ENCODE measurements at regions of chr1 and their contacts with region 1.

Region 1: GRCh38 chr1:234963180-234963903 is 165.3 kb downstream of the TOMM20 start:
- DNase-seq: peak; percentile 96
- ATAC-seq: peak; percentile 81
- H3K4me3 Mint-ChIP-seq: peak overlapping the region; percentile 45
- H3K27ac Mint-ChIP-seq: peak overlapping the region; percentile 96
- H3K4me1 Mint-ChIP-seq: peaks cover 76% of the 10 kb centered on the region
- H3K27me3 Mint-ChIP-seq: no peaks in the 10 kb centered on the region

Region 2: DNA sequence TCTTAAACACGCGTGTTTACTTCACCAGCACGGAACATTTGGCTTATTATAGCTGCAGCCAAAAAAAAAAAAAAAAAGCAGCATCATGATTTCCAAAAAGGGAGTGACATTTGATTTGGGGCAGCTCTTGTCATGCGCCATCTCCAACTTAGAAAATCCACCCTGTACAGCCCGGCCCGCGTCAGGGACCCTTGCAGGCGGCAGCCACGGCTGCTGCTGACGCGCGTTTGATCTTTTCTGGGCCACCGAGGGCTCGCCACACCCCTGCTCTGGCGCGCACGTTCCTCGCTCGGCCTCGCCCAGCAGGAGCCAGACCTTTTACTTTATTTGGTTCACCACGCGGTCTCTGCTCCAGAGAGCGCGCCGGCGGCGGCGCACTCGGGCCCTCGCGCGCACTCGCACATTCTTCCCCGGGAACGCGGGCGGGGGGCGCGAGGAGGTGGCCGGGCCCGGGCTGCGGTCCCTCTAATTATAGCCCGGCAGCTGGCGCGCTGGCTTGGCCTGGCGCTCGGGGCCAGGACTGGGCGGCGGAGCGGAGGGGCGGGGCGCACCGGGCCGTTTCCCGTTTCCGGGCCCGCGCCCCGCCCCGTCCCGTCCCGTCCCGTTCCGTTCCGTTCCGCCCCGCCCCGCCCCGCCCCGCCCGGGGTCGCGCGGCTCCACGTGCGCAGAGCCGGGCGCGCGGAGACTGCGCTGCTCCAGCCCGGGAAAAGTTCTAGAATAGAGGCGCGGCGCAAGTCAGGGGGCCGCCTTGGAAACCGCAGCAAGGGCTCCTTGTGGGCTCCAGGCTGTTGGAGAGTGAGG is 363.5 kb before region 1 on chr1:
- CTCF ChIA-PET with region 1: no interaction called
- POLR2A ChIA-PET with region 1: no interaction called
- intact Hi-C with region 1: loop called in 1 of 2 experiments (anchors 1 kb)
- DNase-seq: peak; percentile 86
- ATAC-seq: peak; percentile 73
- H3K4me3 Mint-ChIP-seq: peak overlapping the region; percentile 97
- H3K27ac Mint-ChIP-seq: peak overlapping the region; percentile 91
- H3K4me1 Mint-ChIP-seq: peaks cover 49% of the 10 kb centered on the region
- H3K27me3 Mint-ChIP-seq: no peaks in the 10 kb centered on the region

Region 3: DNA sequence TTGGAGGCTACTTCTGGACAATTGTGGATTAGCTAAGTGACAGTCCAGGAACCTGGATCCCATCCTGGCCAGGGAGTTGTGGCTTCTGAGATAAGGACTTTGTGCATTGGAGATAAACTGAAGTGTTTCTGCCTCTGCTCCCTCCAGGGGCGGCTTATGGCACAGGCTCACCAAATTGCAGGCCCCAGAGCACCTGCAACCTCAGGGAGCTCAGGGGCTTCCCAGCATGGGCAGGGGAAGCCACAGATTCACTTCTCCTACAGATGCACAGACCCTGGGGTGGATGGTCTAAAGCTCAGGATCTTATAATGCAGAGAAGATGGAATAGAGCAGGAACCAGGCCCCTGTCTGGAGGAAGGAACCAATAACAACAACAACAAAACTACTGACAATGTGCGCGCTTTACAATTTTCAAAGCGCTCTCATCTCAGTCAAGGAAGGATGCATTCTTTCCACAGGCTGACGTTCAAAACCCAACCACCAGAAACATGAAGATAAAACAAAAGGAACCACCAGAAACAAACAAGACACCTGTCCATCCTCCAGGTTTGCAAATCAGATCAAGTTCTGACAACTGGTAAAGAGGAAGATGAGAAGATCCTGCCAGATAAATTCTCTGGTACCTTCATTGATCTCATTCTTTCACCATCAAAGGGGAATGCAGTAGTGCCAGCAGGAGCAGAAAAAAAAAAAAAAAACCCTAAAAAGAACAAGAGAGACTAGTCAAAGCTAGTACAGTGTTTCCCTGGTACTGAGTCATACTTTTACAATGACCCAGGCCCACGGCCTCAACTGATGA is 232.4 kb before region 1 on chr1:
- CTCF ChIA-PET with region 1: no interaction called
- POLR2A ChIA-PET with region 1: no interaction called
- intact Hi-C with region 1: loop called in 1 of 2 experiments (anchors 1 kb)
- DNase-seq: peak; percentile 77
- ATAC-seq: peak; percentile 87
- H3K4me3 Mint-ChIP-seq: peak overlapping the region; percentile 32
- H3K27ac Mint-ChIP-seq: peak overlapping the region; percentile 92
- H3K4me1 Mint-ChIP-seq: peaks cover 71% of the 10 kb centered on the region
- H3K27me3 Mint-ChIP-seq: no peaks in the 10 kb centered on the region

Region 4: GRCh38 chr1:234842726-234843641 is 120.4 kb before region 1 on chr1:
- CTCF ChIA-PET with region 1: no interaction called
- POLR2A ChIA-PET with region 1: interaction called, 7 read pairs
- intact Hi-C with region 1: loop called (anchors 1 kb)
- DNase-seq: peak; percentile 93
- ATAC-seq: peak; percentile 83
- H3K4me3 Mint-ChIP-seq: peak overlapping the region; percentile 63
- H3K27ac Mint-ChIP-seq: peak overlapping the region; percentile 94
- H3K4me1 Mint-ChIP-seq: peaks cover 85% of the 10 kb centered on the region
- H3K27me3 Mint-ChIP-seq: no peaks in the 10 kb centered on the region

Region 5: DNA sequence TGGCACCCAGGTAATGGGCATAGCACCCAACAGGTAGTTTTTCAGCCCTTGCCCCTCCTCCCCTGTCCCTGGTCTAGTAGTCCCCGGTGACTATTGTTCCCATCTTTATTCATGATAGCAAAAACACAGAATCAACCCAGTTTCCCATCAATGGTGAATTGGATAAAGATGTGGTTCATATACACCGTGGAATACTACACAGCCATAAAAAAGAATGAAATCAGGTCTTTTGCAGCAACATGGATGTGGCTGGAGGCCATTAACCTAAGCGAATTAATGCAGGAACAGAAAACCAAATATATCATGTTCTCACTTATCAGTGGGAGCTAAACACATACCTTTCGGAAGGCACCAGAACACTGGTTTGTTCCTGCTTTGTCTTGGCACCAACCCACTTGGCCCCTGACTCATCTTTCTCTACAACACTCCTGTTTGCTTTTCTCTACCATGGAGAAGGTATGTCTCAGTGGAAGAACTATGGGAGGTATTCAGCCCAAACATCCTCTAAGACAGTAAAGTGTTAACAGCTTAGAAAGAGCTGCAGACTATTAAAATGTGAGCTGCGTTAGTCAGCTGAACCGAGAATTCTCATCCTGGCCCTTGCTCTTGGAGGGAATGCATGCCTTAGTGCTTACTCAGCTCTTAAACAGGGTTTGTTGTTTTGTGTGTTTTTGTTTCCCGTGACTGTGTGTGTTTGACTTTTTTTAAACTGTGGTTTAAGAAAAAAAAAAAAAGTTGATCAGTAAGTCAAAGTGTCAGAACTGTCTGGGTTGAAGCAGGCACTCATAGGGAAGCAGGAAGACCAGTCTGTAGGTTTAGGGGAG is 37.7 kb before region 1 on chr1:
- CTCF ChIA-PET with region 1: no interaction called
- POLR2A ChIA-PET with region 1: interaction called, 4 read pairs
- intact Hi-C with region 1: loop called (anchors 2 kb)
- DNase-seq: no peak
- ATAC-seq: peak; percentile 27
- H3K4me3 Mint-ChIP-seq: peak overlapping the region; percentile 59
- H3K27ac Mint-ChIP-seq: peak overlapping the region; percentile 86
- H3K4me1 Mint-ChIP-seq: peaks cover 53% of the 10 kb centered on the region
- H3K27me3 Mint-ChIP-seq: no peaks in the 10 kb centered on the region

Region 6: DNA sequence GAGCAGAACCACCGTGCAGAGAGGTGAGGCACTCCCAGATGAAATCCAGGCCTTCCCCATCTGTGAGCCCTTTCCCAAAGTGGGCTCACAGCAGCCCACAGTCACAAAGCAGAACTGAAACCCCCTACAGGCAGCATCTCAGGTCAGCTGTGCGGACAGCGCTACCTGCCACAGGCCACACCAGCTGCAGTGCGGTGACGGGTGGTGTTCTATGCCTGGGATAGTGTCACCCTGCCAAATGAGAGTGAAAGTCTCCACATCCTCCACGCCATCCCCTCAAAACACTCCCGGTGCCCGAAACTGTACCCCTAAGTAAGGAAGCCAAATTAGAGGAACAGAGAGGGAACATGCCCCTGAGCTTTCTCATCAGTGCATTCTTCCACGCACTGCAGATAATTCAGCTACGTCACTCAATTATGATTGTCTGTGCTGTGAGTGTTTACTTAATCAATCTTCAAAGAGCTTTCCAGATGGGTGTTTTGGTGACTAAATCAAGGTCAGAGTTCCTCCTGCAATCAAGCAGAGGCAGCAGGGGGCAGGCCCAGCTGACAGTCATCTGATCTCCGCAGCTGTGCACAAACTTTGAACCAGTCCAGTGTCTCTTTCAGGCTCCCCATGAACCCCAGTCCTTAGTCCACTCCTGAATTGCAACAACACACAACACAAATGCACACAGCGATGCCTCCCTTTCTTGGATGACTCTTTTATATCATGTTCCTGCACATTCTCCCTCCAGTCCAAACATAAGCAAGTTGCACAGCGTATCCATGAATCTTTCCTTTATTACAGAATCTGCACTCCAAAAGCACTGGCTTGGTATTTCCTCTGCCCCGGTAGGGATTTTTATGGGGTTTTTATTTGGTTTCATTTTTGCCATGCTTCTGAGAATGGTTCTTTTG is 15.3 kb after region 1 on chr1:
- CTCF ChIA-PET with region 1: interaction called, 4 read pairs
- POLR2A ChIA-PET with region 1: interaction called, 4 read pairs
- intact Hi-C with region 1: loop called (anchors 1 kb)
- DNase-seq: peak; percentile 80
- ATAC-seq: peak; percentile 62
- H3K4me3 Mint-ChIP-seq: peak overlapping the region; percentile 75
- H3K27ac Mint-ChIP-seq: peak overlapping the region; percentile 98
- H3K4me1 Mint-ChIP-seq: peaks cover 66% of the 10 kb centered on the region
- H3K27me3 Mint-ChIP-seq: no peaks in the 10 kb centered on the region

Region 7: DNA sequence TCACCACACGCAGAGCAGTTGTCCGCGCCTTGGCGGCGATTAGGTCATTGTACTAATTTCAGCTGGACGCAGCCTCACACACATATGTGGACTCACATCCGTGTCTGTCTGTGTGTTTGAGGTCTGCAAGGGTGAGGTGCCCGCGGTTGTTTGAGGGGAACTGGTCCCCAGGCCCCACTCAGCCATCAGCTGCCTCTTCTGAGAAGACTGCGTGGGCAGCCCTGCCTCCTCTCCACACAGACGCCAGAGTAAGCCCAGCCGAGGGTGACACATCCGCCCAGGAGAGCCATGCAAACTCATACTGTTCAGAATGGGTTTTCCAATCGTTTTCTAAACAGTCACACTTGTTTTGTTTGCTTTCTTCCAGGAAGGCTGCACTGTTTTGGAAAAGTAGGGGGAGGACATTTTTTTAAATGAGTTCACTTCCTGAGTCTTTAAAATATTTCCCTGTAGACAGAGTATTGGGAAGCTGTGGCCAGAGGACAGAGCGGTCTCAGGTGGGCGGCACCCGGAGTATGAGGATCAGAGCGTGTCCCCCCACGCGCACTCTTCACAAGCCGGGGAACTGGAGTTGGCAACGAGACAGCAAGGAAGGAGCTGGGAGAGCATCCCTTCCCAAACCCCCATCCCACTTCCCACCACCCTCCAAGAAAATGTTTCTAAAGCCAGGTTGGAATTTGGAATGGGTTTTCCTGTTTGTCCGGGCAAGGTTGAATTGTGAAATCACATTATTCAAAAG is 112.0 kb after region 1 on chr1:
- CTCF ChIA-PET with region 1: no interaction called
- POLR2A ChIA-PET with region 1: no interaction called
- intact Hi-C with region 1: loop called (anchors 1 kb)
- DNase-seq: peak; percentile 86
- ATAC-seq: peak; percentile 64
- H3K4me3 Mint-ChIP-seq: peak overlapping the region; percentile 41
- H3K27ac Mint-ChIP-seq: peak overlapping the region; percentile 98
- H3K4me1 Mint-ChIP-seq: peaks cover 28% of the 10 kb centered on the region
- H3K27me3 Mint-ChIP-seq: no peaks in the 10 kb centered on the region